Body of pancreas (tissue), 4 donors: ENCODE measurements at regions of chr1 and their contacts with region 1.

Region 1: GRCh38 chr1:201559679-201560162 is 20.8 kb downstream of the NAV1 start:
- DNase-seq: peak; percentile 81 to 84 (median 83)
- ATAC-seq: peak; percentile 95
- H3K4me3 ChIP-seq: no peak overlapping the region
- H3K27ac ChIP-seq: no peak overlapping the region
- H3K4me1 ChIP-seq: peaks cover 5% of the 10 kb centered on the region
- H3K27me3 ChIP-seq: no peaks in the 10 kb centered on the region
- CTCF ChIP-seq: peak; percentile 80 to 99 (median 97)
- POLR2A ChIP-seq: no peak

Region 2: DNA sequence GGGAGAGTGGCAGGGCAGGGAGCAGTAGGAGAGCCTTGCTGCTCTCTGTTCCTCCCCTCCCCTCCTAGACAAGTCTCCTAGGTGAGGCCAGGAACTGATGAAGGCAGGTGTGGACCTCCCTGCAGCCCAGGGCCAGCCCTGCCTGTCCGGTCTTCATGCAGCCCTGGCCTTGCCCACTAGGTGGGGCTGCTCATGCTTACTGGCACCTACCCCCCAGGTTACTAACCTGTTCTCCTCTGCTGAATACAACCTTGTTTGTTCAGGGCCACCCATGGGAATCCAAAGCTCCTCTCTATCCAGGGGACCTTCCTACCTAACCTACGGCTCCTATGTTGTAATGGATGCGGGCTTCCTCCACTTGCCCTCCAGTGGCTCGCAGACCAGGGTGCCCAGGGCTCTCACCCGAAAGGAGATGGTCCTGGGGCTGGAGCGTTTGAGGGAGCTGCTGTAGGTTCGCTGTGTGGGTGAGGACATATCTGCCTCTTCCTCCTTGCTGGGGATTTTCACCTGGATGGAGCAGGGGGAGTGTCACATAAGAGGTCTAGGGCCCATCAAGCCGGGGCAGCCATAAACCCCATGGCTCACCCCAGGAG is 174.3 kb before region 1 on chr1:
- intact Hi-C with region 1: no loop called
- DNase-seq: peak; percentile 81 to 90 (median 84)
- ATAC-seq: peak; percentile 92
- H3K4me3 ChIP-seq: no peak overlapping the region
- H3K27ac ChIP-seq: peak overlapping the region in 2 of 4 donors; percentile 26 to 47
- H3K4me1 ChIP-seq: peaks cover 9% of the 10 kb centered on the region
- H3K27me3 ChIP-seq: no peaks in the 10 kb centered on the region
- CTCF ChIP-seq: peak; percentile 74 to 93 (median 88)
- POLR2A ChIP-seq: no peak

Region 3: DNA sequence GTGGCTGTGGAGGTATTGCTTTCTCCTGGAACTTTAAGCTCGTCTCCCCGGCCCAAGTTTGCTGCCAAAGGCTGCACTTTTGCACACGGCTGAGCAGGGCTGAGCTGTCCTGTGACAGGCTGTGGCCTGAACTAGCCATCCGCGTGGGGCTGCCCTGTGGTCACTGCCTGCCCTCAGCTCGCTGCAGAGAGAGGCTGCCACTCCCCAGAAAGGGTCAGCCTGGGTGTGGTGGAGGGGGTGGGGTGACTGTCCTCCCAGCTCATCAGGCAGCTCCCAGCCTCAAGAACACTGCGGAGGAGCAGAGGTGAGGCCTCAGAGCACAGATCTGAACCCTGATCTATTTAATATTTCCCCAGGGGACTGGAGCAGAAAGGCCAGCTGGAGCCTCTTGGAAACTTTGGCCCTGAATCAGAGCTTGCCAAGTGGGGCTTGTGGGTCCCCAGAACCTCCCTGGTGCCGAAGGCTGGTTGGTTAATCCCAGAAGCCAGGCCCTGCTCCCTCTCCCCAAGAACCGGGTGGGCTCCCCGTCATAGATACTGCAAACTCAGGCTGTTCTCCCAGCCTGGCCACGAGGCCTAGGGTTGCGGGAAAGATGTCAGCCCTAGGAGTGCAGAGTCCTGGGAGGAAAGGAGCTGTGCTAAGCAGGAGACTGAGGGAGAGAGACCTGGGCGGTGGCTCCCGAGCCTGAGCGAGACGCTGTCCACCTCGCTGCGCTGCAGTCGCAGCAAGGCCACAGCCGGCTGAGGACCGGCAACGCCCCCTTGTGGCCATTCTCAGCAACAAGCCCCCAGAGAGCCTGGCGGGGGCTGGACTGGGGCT is 144.1 kb after region 1 on chr1:
- intact Hi-C with region 1: loop called (anchors 2 kb)
- DNase-seq: peak; percentile 82 to 86 (median 86)
- ATAC-seq: peak; percentile 90
- H3K4me3 ChIP-seq: no peak overlapping the region
- H3K27ac ChIP-seq: peak overlapping the region in 3 of 4 donors; percentile 4 to 27 (median 15)
- H3K4me1 ChIP-seq: peaks cover 13% of the 10 kb centered on the region
- H3K27me3 ChIP-seq: no peaks in the 10 kb centered on the region
- CTCF ChIP-seq: peak; percentile 89 to 97 (median 95)
- POLR2A ChIP-seq: no peak

Region 4: GRCh38 chr1:201786824-201787223 is 227.1 kb after region 1 on chr1:
- intact Hi-C with region 1: loop called (anchors 5 kb)
- DNase-seq: peak in 2 of 4 donors; percentile 15 to 17
- ATAC-seq: no peak
- H3K4me3 ChIP-seq: no peak overlapping the region
- H3K27ac ChIP-seq: no peak overlapping the region
- H3K4me1 ChIP-seq: peaks cover 5% of the 10 kb centered on the region
- H3K27me3 ChIP-seq: no peaks in the 10 kb centered on the region
- CTCF ChIP-seq: no peak
- POLR2A ChIP-seq: no peak